Naive thymus-derived CD4-positive, alpha-beta T cell (primary cell): ENCODE measurements at regions of chr2 and their contacts with region 1.

Region 1: GRCh38 chr2:10493636-10494281 is 45.6 kb upstream of the ODC1 start:
- DNase-seq: peak; percentile 18 to 66 (median 49)
- ATAC-seq: peak; percentile 94
- H3K4me3 ChIP-seq: no peak overlapping the region
- H3K4me3 Mint-ChIP-seq: peak overlapping the region in 2 of 10 donors; percentile 4 to 20
- H3K27ac ChIP-seq: no peak overlapping the region
- H3K27ac Mint-ChIP-seq: peak overlapping the region in 1 of 9 donors; percentile 14
- H3K4me1 ChIP-seq: peaks cover 6 to 20% of the 10 kb centered on the region in 2 donors
- H3K4me1 Mint-ChIP-seq: peaks cover 0 to 12% (median 0%) of the 10 kb centered on the region in 7 donors
- H3K27me3 ChIP-seq: no peaks in the 10 kb centered on the region
- H3K27me3 Mint-ChIP-seq: peaks cover 5 to 25% (median 15%) of the 10 kb centered on the region in 5 donors

Region 2: DNA sequence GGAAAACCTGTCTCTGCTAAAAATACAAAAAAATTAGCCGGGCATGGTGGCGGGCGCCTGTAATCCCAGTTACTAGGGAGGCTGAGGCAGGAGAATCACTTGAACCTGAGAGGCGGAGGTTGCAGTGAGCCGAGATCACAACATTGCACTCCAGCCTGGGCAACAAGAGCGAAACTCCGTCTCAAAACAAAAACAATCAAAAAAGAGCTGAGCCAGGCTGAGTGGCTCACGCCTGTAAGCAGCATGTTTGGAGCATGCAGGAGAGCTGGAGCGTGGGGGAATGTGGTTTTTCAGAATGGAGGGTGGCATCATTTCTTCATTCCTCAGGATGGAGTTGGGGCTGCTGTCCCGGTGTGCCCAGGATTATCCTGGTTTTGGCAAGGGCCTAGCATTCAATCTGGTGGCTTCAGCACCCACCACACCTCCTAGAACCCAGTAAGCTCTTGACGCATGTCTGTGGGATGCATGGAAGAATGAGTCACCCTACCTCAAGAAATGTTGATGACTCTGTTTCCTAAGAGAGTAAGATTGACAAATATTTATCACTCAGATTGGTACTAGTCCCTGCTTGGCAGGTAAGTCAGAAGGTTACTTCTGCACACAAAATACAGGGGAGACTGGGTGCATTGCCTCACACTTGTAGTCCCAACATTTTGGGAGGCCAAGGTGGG is 44.6 kb after region 1 on chr2:
- CTCF ChIA-PET with region 1: no interaction called
- POLR2A ChIA-PET with region 1: no interaction called
- intact Hi-C with region 1: loop called in 1 of 2 experiments (anchors 5 kb)
- DNase-seq: no peak
- ATAC-seq: no peak
- H3K4me3 ChIP-seq: no peak overlapping the region
- H3K4me3 Mint-ChIP-seq: peak overlapping the region in 1 of 10 donors; percentile 25
- H3K27ac ChIP-seq: no peak overlapping the region
- H3K27ac Mint-ChIP-seq: no peak overlapping the region
- H3K4me1 ChIP-seq: no peaks in the 10 kb centered on the region
- H3K4me1 Mint-ChIP-seq: peaks cover 0 to 22% (median 4%) of the 10 kb centered on the region in 7 donors
- H3K27me3 ChIP-seq: no peaks in the 10 kb centered on the region
- H3K27me3 Mint-ChIP-seq: peaks cover 5 to 31% (median 20%) of the 10 kb centered on the region in 5 donors